CD8-positive, alpha-beta memory T cell (primary cell): ENCODE measurements at regions of chr6 and their contacts with region 1.

Region 1: DNA sequence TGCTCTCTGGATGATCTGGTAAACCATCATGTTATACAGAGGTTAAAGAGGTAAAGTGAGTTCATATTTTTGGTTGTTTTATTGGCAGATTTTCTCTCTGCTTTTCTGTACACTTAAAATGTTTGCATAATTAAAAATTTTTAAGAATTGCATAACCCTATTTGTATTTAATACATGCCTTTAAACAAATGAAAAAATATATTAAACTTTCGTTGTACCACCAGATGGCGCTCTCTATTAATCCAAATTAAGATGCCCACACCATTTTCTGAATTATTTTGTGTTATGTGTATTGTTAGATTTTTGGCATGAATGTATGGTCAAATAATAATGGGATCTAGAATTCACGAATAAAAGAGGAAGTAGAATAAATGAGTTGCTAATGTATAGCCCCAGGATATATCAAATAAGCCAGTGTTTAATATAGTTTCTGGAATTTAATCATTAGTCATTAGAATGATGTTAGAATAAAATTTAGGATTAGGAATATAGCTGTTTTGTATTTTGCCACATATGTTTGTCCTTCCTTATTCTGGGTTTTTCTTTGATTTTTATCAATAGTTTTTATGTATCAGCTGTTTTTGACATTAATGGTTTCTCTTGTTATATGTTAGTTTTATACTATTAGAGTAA is 38.9 kb downstream of the SMAP1 start:
- DNase-seq: peak in 2 of 5 donors; percentile 30 to 39
- H3K4me3 ChIP-seq: no peak overlapping the region
- H3K4me3 Mint-ChIP-seq: no peak overlapping the region
- H3K27ac ChIP-seq: no peak overlapping the region
- H3K27ac Mint-ChIP-seq: peak overlapping the region in 1 of 8 donors; percentile 85
- H3K4me1 ChIP-seq: peaks cover 6% of the 10 kb centered on the region
- H3K4me1 Mint-ChIP-seq: peaks cover 41 to 77% (median 71%) of the 10 kb centered on the region in 3 donors
- H3K27me3 ChIP-seq: no peaks in the 10 kb centered on the region
- H3K27me3 Mint-ChIP-seq: no peaks in the 10 kb centered on the region

Region 2: GRCh38 chr6:70717038-70717801 is 10.6 kb after region 1 on chr6:
- CTCF ChIA-PET with region 1: interaction called, 12 read pairs
- POLR2A ChIA-PET with region 1: no interaction called
- DNase-seq: peak in 2 of 5 donors; percentile 25 to 45
- H3K4me3 ChIP-seq: no peak overlapping the region
- H3K4me3 Mint-ChIP-seq: peak overlapping the region in 6 of 7 donors; percentile 0 to 59 (median 31)
- H3K27ac ChIP-seq: no peak overlapping the region
- H3K27ac Mint-ChIP-seq: peak overlapping the region; percentile 3 to 92 (median 63)
- H3K4me1 ChIP-seq: peaks cover 18% of the 10 kb centered on the region
- H3K4me1 Mint-ChIP-seq: peaks cover 57 to 75% (median 67%) of the 10 kb centered on the region in 3 donors
- H3K27me3 ChIP-seq: no peaks in the 10 kb centered on the region
- H3K27me3 Mint-ChIP-seq: no peaks in the 10 kb centered on the region

Region 3: DNA sequence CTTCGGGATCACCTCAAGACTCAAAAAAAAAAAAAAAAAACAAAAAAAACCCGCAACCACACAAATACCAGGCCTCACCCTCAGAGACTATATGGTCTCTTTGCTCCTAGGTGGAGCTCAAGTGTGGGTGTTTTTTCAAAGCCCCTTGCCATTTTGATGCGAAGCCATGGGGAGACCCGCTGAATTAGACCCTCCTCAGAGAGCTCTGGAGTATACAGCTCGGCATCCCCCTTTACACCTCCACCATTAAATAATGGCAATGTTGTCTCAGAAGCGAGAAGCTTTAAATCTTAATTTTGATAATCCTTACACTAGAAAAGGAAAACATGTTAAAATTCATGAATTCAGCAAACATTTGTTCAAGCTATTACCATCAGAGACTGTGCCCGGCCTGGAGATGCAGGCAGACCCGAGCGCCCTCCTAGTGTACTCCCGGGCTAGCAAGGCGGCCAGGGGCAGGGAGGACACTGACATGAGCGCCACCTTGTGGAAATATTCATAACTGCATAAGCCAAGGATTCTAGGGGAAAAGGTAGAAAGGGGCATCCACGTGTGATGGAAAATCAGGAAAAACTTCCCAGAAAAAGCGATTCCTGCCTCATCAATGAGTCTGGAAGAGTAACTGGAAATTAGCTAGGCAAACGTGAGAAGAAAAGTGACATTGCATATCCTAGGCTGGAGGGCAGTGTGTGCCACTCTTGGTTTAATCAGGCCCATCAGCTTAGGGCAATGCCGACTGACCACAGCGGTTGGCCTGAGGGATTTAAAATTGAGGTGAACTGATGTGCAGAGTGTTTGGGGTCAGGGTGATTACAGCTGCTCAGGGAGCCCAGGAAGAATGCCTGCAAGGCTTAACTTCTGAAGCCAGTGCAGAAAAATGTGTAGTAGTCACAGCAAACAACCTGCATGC is 177.7 kb after region 1 on chr6:
- CTCF ChIA-PET with region 1: interaction called, 58 read pairs
- POLR2A ChIA-PET with region 1: no interaction called
- DNase-seq: peak; percentile 21 to 64 (median 43)
- H3K4me3 ChIP-seq: no peak overlapping the region
- H3K4me3 Mint-ChIP-seq: no peak overlapping the region
- H3K27ac ChIP-seq: no peak overlapping the region
- H3K27ac Mint-ChIP-seq: no peak overlapping the region
- H3K4me1 ChIP-seq: no peaks in the 10 kb centered on the region
- H3K4me1 Mint-ChIP-seq: no peaks in the 10 kb centered on the region
- H3K27me3 ChIP-seq: no peaks in the 10 kb centered on the region
- H3K27me3 Mint-ChIP-seq: peaks cover 7 to 44% of the 10 kb centered on the region in 2 donors

Region 4: GRCh38 chr6:70955441-70956190 is 249.0 kb after region 1 on chr6:
- CTCF ChIA-PET with region 1: interaction called, 18 read pairs
- POLR2A ChIA-PET with region 1: no interaction called
- DNase-seq: peak; percentile 72 to 85 (median 76)
- H3K4me3 ChIP-seq: peak overlapping the region; percentile 55
- H3K4me3 Mint-ChIP-seq: peak overlapping the region; percentile 74 to 90 (median 77)
- H3K27ac ChIP-seq: no peak overlapping the region
- H3K27ac Mint-ChIP-seq: no peak overlapping the region
- H3K4me1 ChIP-seq: peaks cover 4% of the 10 kb centered on the region
- H3K4me1 Mint-ChIP-seq: peaks cover 14 to 34% (median 19%) of the 10 kb centered on the region in 3 donors
- H3K27me3 ChIP-seq: peaks cover 14% of the 10 kb centered on the region
- H3K27me3 Mint-ChIP-seq: peaks cover 26 to 71% of the 10 kb centered on the region in 2 donors

Region 5: GRCh38 chr6:71567562-71567961 is 861.0 kb after region 1 on chr6:
- CTCF ChIA-PET with region 1: no interaction called
- POLR2A ChIA-PET with region 1: no interaction called
- DNase-seq: no peak
- H3K4me3 ChIP-seq: no peak overlapping the region
- H3K4me3 Mint-ChIP-seq: no peak overlapping the region
- H3K27ac ChIP-seq: no peak overlapping the region
- H3K27ac Mint-ChIP-seq: no peak overlapping the region
- H3K4me1 ChIP-seq: no peaks in the 10 kb centered on the region
- H3K4me1 Mint-ChIP-seq: no peaks in the 10 kb centered on the region
- H3K27me3 ChIP-seq: no peaks in the 10 kb centered on the region
- H3K27me3 Mint-ChIP-seq: no peaks in the 10 kb centered on the region